Right cardiac atrium (tissue), 5 donors: ENCODE measurements at regions of chr22 and their contacts with region 1.

Region 1: GRCh38 chr22:20016734-20017621 is at the start of gene ARVCF:
- DNase-seq: peak; percentile 93 to 97 (median 96)
- ATAC-seq: peak; percentile 68 to 74
- H3K4me3 ChIP-seq: peak within 1 kb of the TSS; percentile 82
- H3K27ac ChIP-seq: no peak within 1 kb of the TSS
- H3K4me1 ChIP-seq: no peaks in the 10 kb centered on the region
- H3K27me3 ChIP-seq: no peaks in the 10 kb centered on the region
- total RNA-seq, gene ARVCF: 11.1 to 27.4 (median 18.4) TPM

Region 2: GRCh38 chr22:19959043-19959586 is 57.9 kb before region 1 on chr22:
- intact Hi-C with region 1: loop called in 1 of 4 experiments (anchors 10 kb)
- DNase-seq: peak; percentile 85 to 96 (median 93)
- ATAC-seq: peak; percentile 75 to 79
- H3K4me3 ChIP-seq: no peak overlapping the region
- H3K27ac ChIP-seq: no peak overlapping the region
- H3K4me1 ChIP-seq: peaks cover 2% of the 10 kb centered on the region
- H3K27me3 ChIP-seq: no peaks in the 10 kb centered on the region

Region 3: GRCh38 chr22:19970479-19971275 is 46.3 kb before region 1 on chr22:
- intact Hi-C with region 1: loop called (anchors 2 kb)
- DNase-seq: peak; percentile 70 to 91 (median 90)
- ATAC-seq: peak; percentile 66 to 71
- H3K4me3 ChIP-seq: no peak overlapping the region
- H3K27ac ChIP-seq: no peak overlapping the region
- H3K4me1 ChIP-seq: no peaks in the 10 kb centered on the region
- H3K27me3 ChIP-seq: no peaks in the 10 kb centered on the region